RWPE1 (cell line): ENCODE measurements at regions of chr19 and their contacts with region 1.

Region 1: GRCh38 chr19:12757544-12758274 is 6.1 kb downstream of the BEST2 start:
- DNase-seq: peak; percentile 27
- H3K27ac ChIP-seq: no peak overlapping the region
- CTCF ChIP-seq: peak; percentile 76

Region 2: DNA sequence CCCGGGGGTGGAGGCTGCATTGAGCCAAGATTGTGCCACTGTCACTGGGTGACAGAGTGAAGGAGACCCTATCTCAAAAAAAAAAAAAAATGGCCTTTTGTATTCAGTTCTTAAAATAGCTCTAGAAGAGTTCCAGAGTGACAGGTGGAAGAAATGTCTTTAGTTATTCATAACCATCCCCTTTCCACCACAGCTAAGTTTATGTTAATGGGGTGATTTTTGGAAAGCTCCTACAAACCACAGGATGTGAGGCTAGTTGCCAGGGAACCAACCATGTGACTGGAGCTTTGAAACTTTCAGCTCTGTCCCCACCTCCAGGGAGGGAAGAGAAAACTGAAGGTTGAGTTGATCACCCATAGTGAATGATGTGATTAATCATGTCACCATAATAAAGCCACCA is 154.0 kb before region 1 on chr19:
- CTCF ChIA-PET with region 1: no interaction called
- POLR2A ChIA-PET with region 1: no interaction called
- DNase-seq: no peak
- H3K27ac ChIP-seq: no peak overlapping the region
- CTCF ChIP-seq: no peak

Region 3: DNA sequence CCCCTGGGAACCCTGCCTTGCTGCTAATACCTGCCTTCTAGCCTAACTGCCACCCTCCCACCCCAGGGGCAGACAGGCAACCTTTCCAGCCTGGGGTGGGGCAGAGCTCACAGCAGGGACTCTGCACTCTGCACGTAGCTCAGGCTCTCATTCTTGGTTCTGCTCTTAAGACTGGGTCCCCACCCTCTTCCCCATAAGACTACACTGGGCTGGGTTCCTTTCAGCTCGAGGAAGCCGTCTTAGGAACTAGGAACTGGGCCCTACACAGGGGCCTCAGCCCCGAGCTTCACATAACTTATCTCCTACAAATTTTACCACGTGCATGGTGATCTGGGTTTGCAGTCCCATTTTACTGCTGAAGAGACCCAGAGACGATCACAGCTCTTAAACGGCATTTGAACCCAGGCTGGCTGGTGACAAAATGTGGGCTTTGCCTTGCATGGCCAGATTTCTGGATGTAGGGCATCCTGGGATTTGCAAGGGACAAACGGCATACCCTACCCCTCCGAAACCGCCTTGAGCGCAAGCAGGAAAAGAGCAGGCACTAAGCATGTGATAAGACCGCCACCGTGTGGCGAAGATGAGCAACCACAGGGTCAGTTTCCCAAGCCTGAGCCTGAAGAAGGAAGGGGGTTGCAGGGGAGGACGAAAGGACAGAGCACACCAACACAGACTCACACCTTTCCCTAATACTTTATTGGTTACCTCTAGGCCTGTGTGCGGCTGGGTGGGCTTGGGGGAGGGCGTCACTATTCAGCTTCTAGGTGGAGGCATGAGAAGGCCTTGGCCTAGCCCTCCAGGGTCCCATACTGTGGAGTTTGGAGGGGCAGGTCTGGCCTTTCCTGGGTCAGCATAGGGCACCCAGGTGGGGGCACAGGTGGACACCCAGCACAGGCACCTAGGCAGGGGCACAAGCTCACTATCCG is 38.7 kb after region 1 on chr19:
- CTCF ChIA-PET with region 1: interaction called, 19 read pairs
- POLR2A ChIA-PET with region 1: interaction called, 12 read pairs
- DNase-seq: peak; percentile 51
- H3K27ac ChIP-seq: peak overlapping the region; percentile 100
- CTCF ChIP-seq: peak; percentile 90